ENCODE measurements at regions of chr3 and their contacts with region 1.

Region 1: DNA sequence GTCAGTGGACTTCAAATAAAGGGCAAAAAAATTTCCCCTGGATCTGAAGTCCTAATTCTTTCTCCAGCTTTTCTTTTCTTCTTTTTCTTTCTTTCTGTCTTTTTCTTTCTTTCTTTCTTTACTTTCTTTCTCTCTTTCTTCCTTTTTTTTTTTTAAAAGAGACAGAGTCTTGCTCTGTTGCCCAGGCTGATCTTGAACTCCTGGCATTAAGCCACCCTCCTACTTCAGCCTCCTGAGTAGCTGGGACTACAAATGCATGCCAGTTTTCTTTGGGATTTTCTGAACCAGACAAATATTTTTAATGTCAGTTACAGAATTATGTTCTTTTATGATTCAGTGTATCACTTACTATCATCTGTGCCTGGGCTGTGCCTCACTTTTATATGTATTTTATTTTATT is 45.4 kb upstream of the CMTM8 start:
- DNase-seq: no peak
- H3K4me3 ChIP-seq: no peak overlapping the region
- H3K27ac ChIP-seq: no peak overlapping the region
- H3K4me1 ChIP-seq: no peaks in the 10 kb centered on the region
- CTCF ChIP-seq: no peak

Region 2: DNA sequence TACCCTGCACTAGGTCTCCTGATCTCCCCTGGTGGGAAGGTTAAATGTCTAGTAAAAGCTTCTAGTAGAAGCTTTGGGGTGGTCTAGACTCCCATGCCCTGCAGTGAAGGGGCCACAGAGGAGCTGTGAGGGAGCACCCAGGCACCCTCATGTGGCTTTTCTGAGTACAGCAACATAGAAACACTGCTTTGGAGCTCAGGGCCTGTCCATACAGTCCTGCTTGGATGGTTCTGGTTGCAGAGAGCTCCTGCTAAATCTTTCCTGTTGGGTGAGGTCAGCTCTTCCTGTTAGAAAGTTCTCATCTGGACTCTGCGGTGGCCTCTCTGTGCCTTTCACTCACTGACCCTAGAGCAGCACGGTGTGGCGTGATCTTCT is 38.9 kb before region 1 on chr3:
- CTCF ChIA-PET with region 1: no interaction called
- POLR2A ChIA-PET with region 1: no interaction called
- intact Hi-C with region 1: no loop called
- DNase-seq: peak; percentile 50
- H3K4me3 ChIP-seq: no peak overlapping the region
- H3K27ac ChIP-seq: no peak overlapping the region
- H3K4me1 ChIP-seq: no peaks in the 10 kb centered on the region
- CTCF ChIP-seq: peak; percentile 71

Region 3: GRCh38 chr3:33211444-33211843 is 1018.3 kb after region 1 on chr3:
- CTCF ChIA-PET with region 1: no interaction called
- POLR2A ChIA-PET with region 1: interaction called, 10 read pairs
- intact Hi-C with region 1: no loop called
- DNase-seq: no peak
- H3K4me3 ChIP-seq: no peak overlapping the region
- H3K27ac ChIP-seq: no peak overlapping the region
- H3K4me1 ChIP-seq: no peaks in the 10 kb centered on the region
- CTCF ChIP-seq: no peak